H1 (cell line): ENCODE measurements at regions of chr7 and their contacts with region 1.

Region 1: DNA sequence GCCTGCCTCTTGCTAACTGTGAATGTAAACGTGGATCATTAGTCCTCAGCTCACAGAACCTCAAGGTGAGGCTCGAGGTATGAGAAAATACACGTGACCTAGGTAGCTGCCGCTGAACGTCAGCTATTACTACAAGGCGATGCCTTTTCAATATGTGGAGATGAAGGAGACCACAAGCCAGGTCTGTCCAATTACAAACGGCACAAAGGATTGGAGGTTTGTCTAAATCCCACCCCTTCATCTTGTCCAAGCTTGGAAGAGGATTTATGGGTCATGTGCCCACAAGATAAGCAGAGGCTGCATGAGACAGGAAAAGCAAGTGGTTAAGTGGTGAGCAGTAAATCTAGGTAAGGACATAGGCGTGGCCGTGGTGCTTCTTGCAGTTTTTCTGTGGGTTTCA is 3.4 kb downstream of the H2BK1 start:
- DNase-seq: no peak
- H3K4me3 ChIP-seq: no peak overlapping the region
- H3K27ac ChIP-seq: no peak overlapping the region
- H3K4me1 ChIP-seq: peaks cover 0 to 6% (median 3%) of the 10 kb centered on the region in 4 experiments; a peak in 4 of 7 replicates
- H3K27me3 ChIP-seq: peaks cover 0 to 3% (median 0%) of the 10 kb centered on the region in 4 experiments; a peak in 2 of 7 replicates
- CTCF ChIP-seq: no peak
- EP300 ChIP-seq: no peak
- POLR2A ChIP-seq: no peak
- RAD21 ChIP-seq: no peak

Region 2: DNA sequence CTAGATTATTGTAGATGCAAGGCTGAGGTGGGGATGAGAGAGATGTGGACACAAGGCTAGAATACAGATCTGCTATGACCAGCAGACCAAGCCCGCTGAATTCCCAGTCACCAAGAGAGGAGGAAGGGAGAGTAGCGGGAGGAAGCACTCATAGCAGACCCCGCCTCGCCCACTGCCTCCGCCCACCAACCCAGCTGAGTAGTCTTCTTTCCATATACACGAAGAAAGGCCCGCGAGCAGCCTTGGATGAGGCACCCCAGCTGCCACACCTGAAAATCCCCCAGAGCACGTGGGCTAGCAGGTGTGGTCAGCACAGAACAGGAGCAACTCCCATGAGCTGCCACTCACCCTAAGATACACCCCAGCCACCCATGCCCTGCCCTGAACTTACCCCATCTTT is 11.3 kb after region 1 on chr7:
- CTCF ChIA-PET with region 1: interaction called, 25 read pairs
- POLR2A ChIA-PET with region 1: interaction called, 9 read pairs
- DNase-seq: no peak
- H3K4me3 ChIP-seq: no peak overlapping the region
- H3K27ac ChIP-seq: no peak overlapping the region
- H3K4me1 ChIP-seq: no peaks in the 10 kb centered on the region
- H3K27me3 ChIP-seq: no peaks in the 10 kb centered on the region
- CTCF ChIP-seq: no peak
- EP300 ChIP-seq: no peak
- POLR2A ChIP-seq: no peak
- RAD21 ChIP-seq: no peak

Region 3: GRCh38 chr7:151226875-151227782 is 20.2 kb after region 1 on chr7 and contains the start of gene ABCF2:
- CTCF ChIA-PET with region 1: interaction called, 25 read pairs
- POLR2A ChIA-PET with region 1: interaction called, 36 read pairs
- DNase-seq: peak; percentile 95 to 99
- H3K4me3 ChIP-seq: peak within 1 kb of the TSS; percentile 83 to 95 (median 90)
- H3K27ac ChIP-seq: peak within 1 kb of the TSS; percentile 56; the same call in 1 of the 2 replicates
- H3K4me1 ChIP-seq: peaks cover 2 to 9% (median 7%) of the 10 kb centered on the region in 4 experiments; a peak in 5 of 7 replicates
- H3K27me3 ChIP-seq: no peaks in the 10 kb centered on the region
- CTCF ChIP-seq: no peak
- EP300 ChIP-seq: no peak
- POLR2A ChIP-seq: peak; percentile 56 to 76; a peak in 2 of 3 replicates
- RAD21 ChIP-seq: no peak
- total RNA-seq, gene ABCF2: 51.0 and 55.0 TPM in 2 replicates

Region 4: GRCh38 chr7:151680721-151681209 is 473.9 kb after region 1 on chr7:
- CTCF ChIA-PET with region 1: no interaction called
- POLR2A ChIA-PET with region 1: no interaction called
- DNase-seq: no peak
- H3K4me3 ChIP-seq: no peak overlapping the region
- H3K27ac ChIP-seq: no peak overlapping the region
- H3K4me1 ChIP-seq: no peaks in the 10 kb centered on the region
- H3K27me3 ChIP-seq: no peaks in the 10 kb centered on the region
- CTCF ChIP-seq: no peak
- EP300 ChIP-seq: no peak
- POLR2A ChIP-seq: no peak
- RAD21 ChIP-seq: no peak